ENCODE measurements at regions of chr12 and their contacts with region 1.

Region 1: GRCh38 chr12:39144613-39145061 is 239.2 kb upstream of the CPNE8 start:
- DNase-seq: no peak
- H3K4me3 ChIP-seq: peak overlapping the region; percentile 9
- CTCF ChIP-seq: no peak
- POLR2A ChIP-seq: no peak

Region 2: DNA sequence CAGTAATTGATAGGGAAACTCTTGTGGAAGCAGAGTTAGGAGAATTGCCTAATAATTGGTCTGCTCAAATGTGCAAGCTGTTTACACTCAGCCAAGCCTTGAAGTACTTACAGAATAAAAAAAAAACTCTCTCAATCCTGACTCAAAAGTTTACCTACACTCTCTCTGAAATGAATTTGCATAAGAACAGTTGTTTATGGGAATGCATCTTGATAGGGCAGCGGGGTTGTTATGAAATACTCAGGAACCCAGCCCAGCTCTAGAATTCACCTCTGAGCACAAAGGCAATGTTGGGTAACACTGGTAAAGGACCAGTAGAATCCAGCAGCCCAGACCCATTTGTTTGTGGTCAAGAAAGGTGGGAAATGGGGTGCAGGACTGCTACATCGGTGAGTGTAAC is 506.2 kb before region 1 on chr12:
- intact Hi-C with region 1: no loop called
- DNase-seq: no peak
- H3K4me3 ChIP-seq: no peak overlapping the region
- CTCF ChIP-seq: no peak
- POLR2A ChIP-seq: no peak

Region 3: DNA sequence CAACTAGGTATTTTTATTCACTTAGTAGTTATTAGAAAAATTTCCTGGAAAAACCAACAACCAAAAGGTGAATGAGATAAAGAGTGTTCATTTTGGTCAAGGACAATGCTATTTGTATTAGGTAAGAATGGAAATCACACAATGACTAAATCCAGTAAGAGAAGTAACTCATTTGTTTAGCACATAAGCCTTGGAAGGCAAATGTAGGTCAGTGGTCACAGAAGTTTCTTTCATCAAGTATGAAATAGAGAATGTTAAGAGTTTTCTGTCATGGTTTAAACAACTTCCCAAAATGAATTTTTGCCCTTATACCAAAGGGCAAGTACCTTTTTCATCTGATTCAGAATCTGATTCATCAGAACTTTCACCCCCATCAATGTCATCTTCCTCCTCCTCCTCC is 196.5 kb after region 1 on chr12:
- intact Hi-C with region 1: no loop called
- DNase-seq: no peak
- H3K4me3 ChIP-seq: no peak overlapping the region
- CTCF ChIP-seq: no peak
- POLR2A ChIP-seq: no peak

Region 4: GRCh38 chr12:40575987-40576386 is 1431.3 kb after region 1 on chr12:
- intact Hi-C with region 1: no loop called
- DNase-seq: no peak
- H3K4me3 ChIP-seq: no peak overlapping the region
- CTCF ChIP-seq: no peak
- POLR2A ChIP-seq: no peak

Region 5: DNA sequence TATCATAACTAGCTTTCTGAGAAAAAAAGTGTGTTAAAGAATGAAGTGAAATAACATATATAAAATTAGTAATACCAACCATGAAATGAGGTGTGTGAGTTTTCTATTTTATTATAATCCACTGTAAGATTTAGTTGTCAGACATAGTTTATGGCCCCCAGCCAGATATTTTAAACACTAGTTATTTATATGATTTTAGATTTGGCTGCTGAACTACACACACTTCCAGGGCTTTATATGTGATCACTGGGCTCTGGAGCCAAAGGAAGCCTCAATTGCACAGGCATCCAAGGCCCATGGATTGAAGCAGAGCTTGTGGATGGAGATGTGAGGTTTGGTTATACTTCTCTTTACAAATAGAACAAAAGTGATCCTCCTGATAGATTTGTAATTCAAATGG is 1498.9 kb after region 1 on chr12:
- intact Hi-C with region 1: loop called (anchors 5 kb)
- DNase-seq: no peak
- H3K4me3 ChIP-seq: no peak overlapping the region
- CTCF ChIP-seq: no peak
- POLR2A ChIP-seq: no peak